Gastrocnemius medialis (tissue), 4 donors: ENCODE measurements at regions of chr4 and their contacts with region 1.

Region 1: GRCh38 chr4:154406018-154406795 is 85.4 kb downstream of the DCHS2 start:
- DNase-seq: no peak
- ATAC-seq: no peak
- H3K4me3 ChIP-seq: no peak overlapping the region
- H3K27ac ChIP-seq: no peak overlapping the region
- H3K4me1 ChIP-seq: no peaks in the 10 kb centered on the region
- H3K27me3 ChIP-seq: no peaks in the 10 kb centered on the region
- CTCF ChIP-seq: no peak
- POLR2A ChIP-seq: no peak

Region 2: GRCh38 chr4:154429176-154429575 is 23.0 kb after region 1 on chr4:
- in situ Hi-C with region 1: no loop called
- intact Hi-C with region 1: loop called (anchors 1 kb)
- DNase-seq: no peak
- ATAC-seq: no peak
- H3K4me3 ChIP-seq: no peak overlapping the region
- H3K27ac ChIP-seq: no peak overlapping the region
- H3K4me1 ChIP-seq: no peaks in the 10 kb centered on the region
- H3K27me3 ChIP-seq: no peaks in the 10 kb centered on the region
- CTCF ChIP-seq: no peak
- POLR2A ChIP-seq: no peak

Region 3: DNA sequence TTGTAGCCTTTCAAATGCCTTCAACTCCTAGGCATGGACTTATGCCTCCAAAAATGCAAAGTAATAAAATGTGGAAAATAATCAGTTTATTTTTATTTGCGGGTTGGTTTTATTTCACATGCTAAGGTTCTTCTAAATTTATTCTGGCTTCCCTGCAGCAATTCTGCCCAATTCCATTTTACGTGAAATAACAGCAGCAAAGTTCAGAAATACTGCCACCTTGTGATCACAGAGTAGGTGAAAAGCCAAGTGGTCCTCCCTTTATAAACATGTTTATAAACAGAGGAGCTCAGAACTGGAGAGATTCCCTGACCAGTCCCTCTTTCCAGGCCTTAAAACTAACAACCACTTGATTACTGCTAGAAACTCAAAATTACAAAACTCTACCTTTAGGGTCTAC is 100.0 kb after region 1 on chr4:
- in situ Hi-C with region 1: no loop called
- intact Hi-C with region 1: no loop called
- DNase-seq: no peak
- ATAC-seq: no peak
- H3K4me3 ChIP-seq: no peak overlapping the region
- H3K27ac ChIP-seq: no peak overlapping the region
- H3K4me1 ChIP-seq: no peaks in the 10 kb centered on the region
- H3K27me3 ChIP-seq: no peaks in the 10 kb centered on the region
- CTCF ChIP-seq: peak in 2 of 5 experiments; percentile 26 to 27
- POLR2A ChIP-seq: no peak

Region 4: GRCh38 chr4:154626793-154627484 is 220.7 kb after region 1 on chr4:
- in situ Hi-C with region 1: no loop called
- intact Hi-C with region 1: no loop called
- DNase-seq: no peak
- ATAC-seq: no peak
- H3K4me3 ChIP-seq: peak overlapping the region in 3 of 4 donors; percentile 13 to 29 (median 18)
- H3K27ac ChIP-seq: no peak overlapping the region
- H3K4me1 ChIP-seq: peaks cover 0 to 3% of the 10 kb centered on the region in 2 donors
- H3K27me3 ChIP-seq: peaks cover 0 to 4% (median 0%) of the 10 kb centered on the region in 3 donors
- CTCF ChIP-seq: peak in 1 of 5 experiments; percentile 26
- POLR2A ChIP-seq: no peak